ENCODE measurements at regions of chr1 and their contacts with region 1.

Region 1: GRCh38 chr1:23394684-23395083 is 25.0 kb upstream of the ZNF436 start:
- DNase-seq: no peak
- H3K4me3 Mint-ChIP-seq: no peak overlapping the region
- H3K27ac Mint-ChIP-seq: no peak overlapping the region
- H3K4me1 Mint-ChIP-seq: no peaks in the 10 kb centered on the region
- H3K27me3 Mint-ChIP-seq: no peaks in the 10 kb centered on the region

Region 2: GRCh38 chr1:23216771-23217420 is 177.8 kb before region 1 on chr1:
- intact Hi-C with region 1: loop called (anchors 10 kb)
- DNase-seq: no peak
- H3K4me3 Mint-ChIP-seq: no peak overlapping the region
- H3K27ac Mint-ChIP-seq: no peak overlapping the region
- H3K4me1 Mint-ChIP-seq: no peaks in the 10 kb centered on the region
- H3K27me3 Mint-ChIP-seq: peaks cover 71% of the 10 kb centered on the region